Upper lobe of right lung (tissue), 1 donor: ENCODE measurements at regions of chrX and their contacts with region 1.

Region 1: GRCh38 chrX:123173833-123174232 is 10.2 kb upstream of the GRIA3 start:
- DNase-seq: no peak
- ATAC-seq: no peak
- H3K4me3 ChIP-seq: no peak overlapping the region
- H3K27ac ChIP-seq: no peak overlapping the region
- H3K4me1 ChIP-seq: no peaks in the 10 kb centered on the region
- H3K27me3 ChIP-seq: no peaks in the 10 kb centered on the region
- CTCF ChIP-seq: no peak

Region 2: DNA sequence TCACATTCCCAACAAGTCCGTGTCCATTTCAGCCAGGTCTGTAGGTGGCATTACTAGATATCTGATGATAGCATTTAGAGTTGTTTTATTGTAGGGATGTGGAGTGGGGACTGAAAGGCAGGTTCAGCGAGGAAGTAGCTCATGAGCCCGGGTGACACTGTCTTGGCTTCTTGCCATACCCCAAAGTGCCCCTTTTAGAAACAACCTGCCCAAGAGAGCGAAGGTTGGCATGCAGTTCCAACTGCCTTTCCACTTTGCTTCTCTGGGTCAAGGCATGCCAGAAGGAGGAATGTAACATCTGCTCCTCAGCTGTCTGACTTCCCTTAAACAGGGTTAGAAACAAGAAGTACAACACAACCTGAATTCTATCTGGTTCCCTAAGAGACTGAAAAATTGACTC is 19.3 kb after region 1 on chrX:
- intact Hi-C with region 1: loop called (anchors 1 kb)
- DNase-seq: no peak
- ATAC-seq: no peak
- H3K4me3 ChIP-seq: no peak overlapping the region
- H3K27ac ChIP-seq: no peak overlapping the region
- H3K4me1 ChIP-seq: no peaks in the 10 kb centered on the region
- H3K27me3 ChIP-seq: no peaks in the 10 kb centered on the region
- CTCF ChIP-seq: no peak